ENCODE measurements at regions of chr5 and their contacts with region 1.

Region 1: GRCh38 chr5:1769752-1770442 is 29.7 kb downstream of the MRPL36 start:
- DNase-seq: no peak
- H3K4me3 ChIP-seq: no peak overlapping the region
- H3K27ac ChIP-seq: no peak overlapping the region
- H3K4me1 ChIP-seq: no peaks in the 10 kb centered on the region
- H3K27me3 ChIP-seq: no peaks in the 10 kb centered on the region
- CTCF ChIP-seq: no peak
- POLR2A ChIP-seq: no peak

Region 2: DNA sequence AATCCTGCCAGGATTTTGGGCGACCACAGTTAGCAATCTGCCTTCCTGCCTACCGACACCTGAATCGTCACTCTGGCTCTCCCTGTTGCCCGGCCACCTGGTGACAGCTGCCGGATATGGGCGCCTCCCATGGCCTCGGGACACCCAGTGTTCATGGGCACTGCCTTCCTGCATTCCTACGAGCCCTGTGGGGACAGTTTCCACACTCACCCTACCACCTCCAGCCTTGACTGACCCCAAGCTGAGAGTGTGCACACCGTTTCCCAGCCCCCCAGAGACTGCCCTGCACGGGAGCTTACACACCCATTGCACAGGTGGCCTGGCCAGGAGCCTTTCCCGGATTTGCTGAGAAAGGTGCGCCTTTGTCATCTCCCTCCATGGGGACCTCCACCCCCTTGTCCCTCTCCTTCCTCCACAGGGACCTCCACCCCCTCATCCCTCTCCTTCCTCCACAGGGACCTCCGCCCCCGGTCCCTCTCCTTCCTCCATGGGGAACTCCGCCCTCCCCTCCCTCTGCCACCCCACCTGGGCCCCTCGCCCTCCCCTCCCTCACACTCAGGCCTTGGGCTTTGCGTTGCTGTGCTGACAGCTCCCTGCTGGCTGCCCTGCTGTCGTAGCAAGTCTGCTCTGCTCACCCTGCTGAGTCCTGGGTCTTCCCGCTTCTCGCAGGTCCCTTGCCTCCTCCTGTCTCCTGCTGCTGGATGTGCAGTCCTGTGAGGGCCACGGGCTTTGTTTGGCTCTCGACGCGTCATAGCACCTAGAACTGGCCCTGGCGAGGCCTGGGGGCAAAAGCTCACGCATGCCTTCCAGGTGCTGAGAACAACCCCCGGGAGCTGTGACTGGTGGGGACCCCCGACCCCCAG is 18.6 kb before region 1 on chr5:
- intact Hi-C with region 1: no loop called
- DNase-seq: peak in 1 of 2 donors; percentile 37
- H3K4me3 ChIP-seq: no peak overlapping the region
- H3K27ac ChIP-seq: no peak overlapping the region
- H3K4me1 ChIP-seq: no peaks in the 10 kb centered on the region
- H3K27me3 ChIP-seq: peaks cover 0 to 26% of the 10 kb centered on the region in 2 donors
- CTCF ChIP-seq: no peak
- POLR2A ChIP-seq: no peak

Region 3: DNA sequence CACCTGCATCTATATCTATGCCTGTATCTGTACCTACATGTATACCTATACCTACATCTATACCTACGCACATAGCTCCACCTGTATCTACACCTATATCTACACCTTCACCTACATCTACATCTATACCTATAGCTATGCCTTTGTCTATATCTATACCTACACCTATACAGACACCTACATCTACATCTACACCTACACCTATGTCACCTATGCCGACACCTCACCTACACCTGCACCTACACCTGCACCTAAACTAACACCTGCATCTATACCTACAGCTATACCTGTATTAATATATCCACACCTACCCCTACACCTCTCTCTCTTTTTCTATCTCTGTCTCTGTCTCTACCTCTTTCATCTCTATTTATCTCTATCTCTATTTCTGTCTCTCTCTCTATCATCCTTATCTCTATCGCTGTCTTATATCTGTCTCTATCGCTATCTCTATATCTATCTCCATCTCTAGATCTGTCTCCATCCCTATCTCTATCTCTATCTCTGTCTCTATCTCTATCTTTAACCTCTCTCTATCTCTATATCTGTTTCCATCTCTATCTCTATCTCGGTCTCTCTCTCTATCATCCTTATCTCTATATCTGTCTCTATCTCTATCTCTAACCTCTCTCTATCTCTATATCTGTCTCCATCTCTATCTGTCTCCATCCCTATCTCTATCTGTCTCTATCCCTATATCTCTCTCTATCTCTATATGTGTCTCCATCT is 75.0 kb after region 1 on chr5:
- intact Hi-C with region 1: loop called (anchors 2 kb)
- DNase-seq: no peak
- H3K4me3 ChIP-seq: no peak overlapping the region
- H3K27ac ChIP-seq: no peak overlapping the region
- H3K4me1 ChIP-seq: no peaks in the 10 kb centered on the region
- H3K27me3 ChIP-seq: peaks cover 0 to 30% of the 10 kb centered on the region in 2 donors
- CTCF ChIP-seq: no peak
- POLR2A ChIP-seq: no peak

Measured in breast epithelium (tissue), 4 donors.